ENCODE measurements at regions of chr13 and their contacts with region 1.

Region 1: DNA sequence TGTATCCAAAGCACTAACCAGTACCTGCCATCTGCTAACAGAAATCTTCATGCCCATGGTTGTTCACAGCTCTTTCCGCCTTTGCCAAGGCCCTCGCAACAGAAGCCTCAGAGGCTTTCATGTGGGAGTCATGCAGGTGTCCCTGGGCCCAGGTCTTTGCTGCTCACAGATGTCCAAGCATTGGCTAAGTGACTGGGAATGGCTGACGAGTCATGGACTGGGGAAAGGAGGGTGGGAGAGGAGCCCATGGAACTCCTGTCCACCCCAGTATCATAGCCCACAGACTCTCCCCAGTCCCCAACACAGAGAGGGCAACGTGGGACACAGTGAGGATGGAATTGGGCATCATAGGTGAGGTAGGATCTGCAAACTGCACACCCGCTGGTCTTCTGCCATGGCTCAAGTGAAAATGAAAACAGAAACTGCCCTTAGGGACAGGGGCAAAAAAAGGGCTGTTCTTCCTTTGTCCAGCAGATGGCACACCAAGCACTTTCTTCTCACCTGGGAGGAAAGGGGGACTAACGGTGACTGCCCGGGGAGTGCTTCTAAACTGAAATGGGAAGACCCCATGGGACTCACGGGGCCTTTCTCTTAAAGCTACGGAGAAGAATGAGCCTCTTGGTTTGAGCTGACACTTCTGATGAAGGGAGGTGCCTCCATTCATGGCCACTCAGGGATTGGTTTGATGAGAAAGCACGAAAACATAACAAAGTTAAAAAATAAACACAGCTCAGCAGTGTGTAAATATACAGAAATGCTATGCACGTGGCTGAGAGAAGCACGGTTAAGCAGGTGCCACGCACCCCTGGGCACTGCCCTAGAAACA is 11.1 kb upstream of the DHRS12 start:
- DNase-seq: peak; percentile 88
- ATAC-seq: peak; percentile 92
- H3K4me3 Mint-ChIP-seq: peak overlapping the region; percentile 57
- H3K27ac Mint-ChIP-seq: peak overlapping the region; percentile 79
- H3K4me1 Mint-ChIP-seq: peaks cover 52% of the 10 kb centered on the region
- H3K27me3 Mint-ChIP-seq: no peaks in the 10 kb centered on the region

Region 2: DNA sequence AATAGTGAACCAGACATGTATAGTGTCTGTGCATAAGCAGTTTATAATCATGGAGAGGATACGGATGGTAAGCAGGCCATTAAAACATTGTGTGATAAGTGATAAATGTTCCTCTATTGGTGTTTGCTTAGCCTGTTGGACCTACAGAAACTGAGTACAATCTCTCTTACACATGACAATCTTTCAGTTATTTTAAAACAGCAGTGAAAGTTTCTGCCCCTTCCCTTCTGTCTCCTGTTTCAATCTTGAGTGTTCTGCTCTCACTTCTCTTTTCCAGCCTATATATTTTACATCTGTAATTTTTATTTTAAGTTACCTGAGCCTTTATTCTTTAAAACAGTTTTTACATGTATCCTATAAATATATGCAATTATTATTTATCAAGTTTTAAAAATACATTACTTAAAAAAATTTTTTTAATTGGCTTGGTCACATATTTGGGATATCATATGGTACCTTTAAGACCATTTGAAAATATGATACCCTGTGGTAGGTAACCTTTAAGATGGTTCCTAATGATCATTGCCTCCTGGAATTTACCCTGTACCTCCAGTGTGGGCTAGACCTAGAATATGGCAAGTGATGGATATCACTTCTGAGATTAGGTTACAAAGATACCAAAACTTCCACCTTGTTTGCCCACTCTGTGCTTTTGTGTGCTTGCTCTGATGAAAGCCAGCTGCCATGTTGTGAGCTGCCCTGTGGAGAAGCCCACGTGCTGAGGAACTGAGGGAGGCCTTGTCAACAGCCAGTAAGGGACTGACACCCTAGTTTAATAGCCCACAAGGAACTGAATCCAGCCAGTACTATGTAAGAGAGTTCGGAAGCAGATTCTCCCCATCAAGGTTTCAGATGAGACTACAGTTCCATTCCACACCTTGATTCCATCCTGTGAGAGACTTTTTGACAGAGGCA is 110.4 kb before region 1 on chr13:
- CTCF ChIA-PET with region 1: no interaction called
- POLR2A ChIA-PET with region 1: no interaction called
- DNase-seq: no peak
- ATAC-seq: no peak
- H3K4me3 Mint-ChIP-seq: no peak overlapping the region
- H3K27ac Mint-ChIP-seq: no peak overlapping the region
- H3K4me1 Mint-ChIP-seq: no peaks in the 10 kb centered on the region
- H3K27me3 Mint-ChIP-seq: no peaks in the 10 kb centered on the region

Region 3: GRCh38 chr13:51721496-51721895 is 93.5 kb before region 1 on chr13:
- CTCF ChIA-PET with region 1: no interaction called
- POLR2A ChIA-PET with region 1: no interaction called
- DNase-seq: no peak
- ATAC-seq: no peak
- H3K4me3 Mint-ChIP-seq: no peak overlapping the region
- H3K27ac Mint-ChIP-seq: no peak overlapping the region
- H3K4me1 Mint-ChIP-seq: no peaks in the 10 kb centered on the region
- H3K27me3 Mint-ChIP-seq: no peaks in the 10 kb centered on the region

Region 4: GRCh38 chr13:51803422-51804294 is 11.4 kb before region 1 on chr13 and contains the start of gene DHRS12:
- CTCF ChIA-PET with region 1: interaction called, 39 read pairs
- POLR2A ChIA-PET with region 1: interaction called, 4 read pairs
- DNase-seq: peak; percentile 90
- ATAC-seq: peak; percentile 83
- H3K4me3 Mint-ChIP-seq: peak within 1 kb of the TSS; percentile 88
- H3K27ac Mint-ChIP-seq: peak within 1 kb of the TSS; percentile 99
- H3K4me1 Mint-ChIP-seq: peaks cover 37% of the 10 kb centered on the region
- H3K27me3 Mint-ChIP-seq: no peaks in the 10 kb centered on the region
- total RNA-seq, gene DHRS12: 8.9 to 10.0 TPM

Region 5: DNA sequence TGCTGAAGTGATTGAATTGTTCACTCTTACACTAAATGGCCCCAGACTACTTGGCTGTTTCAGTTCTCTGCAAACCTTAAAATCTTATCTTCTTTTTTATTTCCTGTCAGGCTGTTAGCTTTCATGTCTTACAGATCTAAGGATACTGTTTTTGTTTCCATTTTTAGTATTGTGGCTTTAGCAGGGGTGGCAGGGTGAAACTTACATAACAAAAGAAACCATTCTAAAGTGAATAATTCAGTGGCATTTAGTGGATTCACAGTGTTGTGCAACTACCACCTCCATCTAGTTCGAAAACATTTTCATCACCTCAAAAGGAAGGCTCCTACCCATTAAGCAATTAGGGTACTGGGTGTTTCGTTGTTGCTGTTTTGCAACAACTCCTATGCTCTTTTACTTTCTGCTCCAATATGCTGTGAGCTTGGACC is 10.1 kb after region 1 on chr13:
- CTCF ChIA-PET with region 1: interaction called, 175 read pairs
- POLR2A ChIA-PET with region 1: interaction called, 7 read pairs
- DNase-seq: peak; percentile 44
- ATAC-seq: peak; percentile 66
- H3K4me3 Mint-ChIP-seq: peak overlapping the region; percentile 60
- H3K27ac Mint-ChIP-seq: peak overlapping the region; percentile 82
- H3K4me1 Mint-ChIP-seq: peaks cover 80% of the 10 kb centered on the region
- H3K27me3 Mint-ChIP-seq: no peaks in the 10 kb centered on the region

Region 6: GRCh38 chr13:51832471-51833152 is 17.6 kb after region 1 on chr13:
- CTCF ChIA-PET with region 1: interaction called, 251 read pairs
- POLR2A ChIA-PET with region 1: interaction called, 16 read pairs
- DNase-seq: peak; percentile 69
- ATAC-seq: peak; percentile 94
- H3K4me3 Mint-ChIP-seq: no peak overlapping the region
- H3K27ac Mint-ChIP-seq: peak overlapping the region; percentile 7
- H3K4me1 Mint-ChIP-seq: peaks cover 52% of the 10 kb centered on the region
- H3K27me3 Mint-ChIP-seq: no peaks in the 10 kb centered on the region

Region 7: DNA sequence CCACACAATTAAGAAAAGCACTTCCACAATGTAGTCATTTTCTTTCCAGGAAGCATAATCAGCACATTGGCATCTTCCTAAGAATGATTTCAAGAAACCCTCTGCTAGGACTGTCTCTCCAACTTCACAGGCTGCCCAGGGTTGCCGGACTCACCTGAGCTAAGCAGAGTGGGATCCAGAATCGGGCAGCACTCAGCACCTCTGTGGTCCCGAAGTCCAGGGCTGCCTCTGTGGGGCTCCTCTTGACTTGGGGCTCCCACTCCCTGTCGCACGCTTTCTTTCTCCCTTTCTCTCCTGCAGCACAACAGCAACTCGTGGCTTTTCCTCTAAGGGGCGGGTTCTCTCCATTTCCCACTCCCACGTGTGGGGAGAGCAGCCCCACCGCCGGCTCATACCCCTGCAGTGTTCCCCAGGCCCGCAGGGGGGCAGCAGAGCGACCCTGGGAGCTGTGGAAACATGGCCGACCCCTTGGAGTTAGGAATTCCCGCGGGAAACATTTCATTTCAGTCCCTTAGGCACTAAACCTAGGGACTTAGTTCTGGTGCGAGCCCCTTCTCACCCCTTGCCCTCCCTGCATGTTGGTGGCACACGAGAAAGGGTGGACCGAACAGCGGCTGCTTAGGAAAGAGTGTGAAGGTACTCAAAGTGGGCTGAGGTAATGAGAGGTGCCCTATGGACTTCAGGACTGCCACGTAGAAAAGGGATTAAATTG is 30.0 kb after region 1 on chr13 and contains the start of gene TMEM272:
- CTCF ChIA-PET with region 1: interaction called, 251 read pairs
- POLR2A ChIA-PET with region 1: no interaction called
- DNase-seq: peak; percentile 51
- ATAC-seq: peak; percentile 70
- H3K4me3 Mint-ChIP-seq: peak within 1 kb of the TSS; percentile 24
- H3K27ac Mint-ChIP-seq: no peak within 1 kb of the TSS
- H3K4me1 Mint-ChIP-seq: peaks cover 13% of the 10 kb centered on the region
- H3K27me3 Mint-ChIP-seq: peaks cover 13% of the 10 kb centered on the region
- total RNA-seq, gene TMEM272: 0.23 to 0.29 TPM

Region 8: GRCh38 chr13:51895906-51896888 is 81.2 kb after region 1 on chr13:
- CTCF ChIA-PET with region 1: interaction called, 15 read pairs
- POLR2A ChIA-PET with region 1: no interaction called
- DNase-seq: peak; percentile 56
- ATAC-seq: peak; percentile 79
- H3K4me3 Mint-ChIP-seq: no peak overlapping the region
- H3K27ac Mint-ChIP-seq: no peak overlapping the region
- H3K4me1 Mint-ChIP-seq: no peaks in the 10 kb centered on the region
- H3K27me3 Mint-ChIP-seq: peaks cover 17% of the 10 kb centered on the region

Region 9: DNA sequence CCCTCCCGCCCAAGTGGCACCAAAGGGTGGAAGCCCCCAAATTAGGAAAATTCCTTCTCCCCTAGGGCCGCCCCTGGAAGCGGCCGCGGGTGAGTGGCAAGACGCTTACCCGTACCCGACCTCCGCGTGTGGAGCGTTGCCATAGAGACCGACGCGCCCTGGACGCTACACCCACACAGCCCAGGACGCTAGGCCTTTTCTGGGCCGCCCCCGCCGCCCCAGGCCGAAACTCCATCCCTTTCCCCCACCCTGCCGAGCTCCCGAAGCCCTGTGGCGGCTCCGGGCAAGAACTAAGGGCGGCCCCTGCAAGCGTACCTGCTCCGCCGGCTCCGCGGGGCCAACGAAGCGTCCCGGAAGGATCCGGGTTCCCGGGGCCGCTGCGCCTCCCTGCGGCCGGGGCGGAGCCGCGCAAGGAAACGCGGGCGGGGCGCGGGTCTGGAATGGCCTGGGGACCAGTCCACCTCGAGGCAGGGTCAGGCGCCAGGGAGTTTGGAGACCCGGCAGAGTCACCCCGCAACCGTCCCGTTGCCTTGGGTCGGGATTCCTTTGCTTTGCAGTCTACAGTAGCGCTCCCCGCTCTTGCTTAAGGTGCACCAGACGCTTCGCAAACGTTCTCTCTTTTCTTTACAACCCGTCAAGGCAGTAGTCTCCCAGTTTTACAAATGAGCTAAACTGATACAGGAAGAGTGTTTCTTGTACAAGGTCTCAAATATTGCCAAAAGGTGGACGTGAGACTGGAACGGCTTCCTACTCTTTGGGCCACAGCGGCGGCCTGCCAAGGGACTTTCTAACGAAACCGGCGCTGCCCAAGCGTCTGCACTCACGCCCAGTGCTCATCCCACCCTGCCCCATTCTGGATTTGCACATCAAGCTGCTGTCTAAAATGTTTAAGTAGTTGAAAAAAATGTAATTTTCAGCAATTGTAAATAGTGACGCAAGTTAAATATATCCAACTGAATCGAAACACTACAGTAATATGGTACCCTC is 314.0 kb after region 1 on chr13 and contains the start of gene NEK5:
- CTCF ChIA-PET with region 1: interaction called, 45 read pairs
- POLR2A ChIA-PET with region 1: no interaction called
- DNase-seq: peak; percentile 60
- ATAC-seq: peak; percentile 89
- H3K4me3 Mint-ChIP-seq: peak within 1 kb of the TSS; percentile 72
- H3K27ac Mint-ChIP-seq: no peak within 1 kb of the TSS
- H3K4me1 Mint-ChIP-seq: peaks cover 16% of the 10 kb centered on the region
- H3K27me3 Mint-ChIP-seq: peaks cover 17% of the 10 kb centered on the region
- total RNA-seq, gene NEK5: not detected